IMR-90 (cell line): ENCODE measurements at regions of chr17 and their contacts with region 1.

Region 1: GRCh38 chr17:6473128-6473767 is 29.0 kb downstream of the PIMREG start:
- DNase-seq: peak; percentile 65
- ATAC-seq: peak; percentile 92
- H3K4me3 ChIP-seq: no peak overlapping the region
- H3K27ac ChIP-seq: no peak overlapping the region
- H3K4me1 ChIP-seq: peaks cover 13% of the 10 kb centered on the region
- H3K27me3 ChIP-seq: no peaks in the 10 kb centered on the region
- CTCF ChIP-seq: peak; percentile 83
- POLR2A ChIP-seq: no peak
- RAD21 ChIP-seq: peak; percentile 84

Region 2: GRCh38 chr17:6443692-6444569 is 29.3 kb before region 1 on chr17 and contains the start of gene PIMREG:
- CTCF ChIA-PET with region 1: no interaction called
- POLR2A ChIA-PET with region 1: no interaction called
- dilution Hi-C with region 1: no loop called
- in situ Hi-C with region 1: no loop called
- intact Hi-C with region 1: no loop called
- DNase-seq: peak; percentile 88
- ATAC-seq: peak; percentile 97
- H3K4me3 ChIP-seq: peak within 1 kb of the TSS; percentile 57
- H3K27ac ChIP-seq: peak within 1 kb of the TSS; percentile 76
- H3K4me1 ChIP-seq: peaks cover 3% of the 10 kb centered on the region; the same call in 1 of the 2 replicates
- H3K27me3 ChIP-seq: no peaks in the 10 kb centered on the region
- CTCF ChIP-seq: no peak
- POLR2A ChIP-seq: 0 out of 2 replicates have a peak, but pooled peaks have one; percentile 40
- RAD21 ChIP-seq: no peak
- total RNA-seq, gene PIMREG: 19.4 and 21.5 TPM in 2 replicates

Region 3: DNA sequence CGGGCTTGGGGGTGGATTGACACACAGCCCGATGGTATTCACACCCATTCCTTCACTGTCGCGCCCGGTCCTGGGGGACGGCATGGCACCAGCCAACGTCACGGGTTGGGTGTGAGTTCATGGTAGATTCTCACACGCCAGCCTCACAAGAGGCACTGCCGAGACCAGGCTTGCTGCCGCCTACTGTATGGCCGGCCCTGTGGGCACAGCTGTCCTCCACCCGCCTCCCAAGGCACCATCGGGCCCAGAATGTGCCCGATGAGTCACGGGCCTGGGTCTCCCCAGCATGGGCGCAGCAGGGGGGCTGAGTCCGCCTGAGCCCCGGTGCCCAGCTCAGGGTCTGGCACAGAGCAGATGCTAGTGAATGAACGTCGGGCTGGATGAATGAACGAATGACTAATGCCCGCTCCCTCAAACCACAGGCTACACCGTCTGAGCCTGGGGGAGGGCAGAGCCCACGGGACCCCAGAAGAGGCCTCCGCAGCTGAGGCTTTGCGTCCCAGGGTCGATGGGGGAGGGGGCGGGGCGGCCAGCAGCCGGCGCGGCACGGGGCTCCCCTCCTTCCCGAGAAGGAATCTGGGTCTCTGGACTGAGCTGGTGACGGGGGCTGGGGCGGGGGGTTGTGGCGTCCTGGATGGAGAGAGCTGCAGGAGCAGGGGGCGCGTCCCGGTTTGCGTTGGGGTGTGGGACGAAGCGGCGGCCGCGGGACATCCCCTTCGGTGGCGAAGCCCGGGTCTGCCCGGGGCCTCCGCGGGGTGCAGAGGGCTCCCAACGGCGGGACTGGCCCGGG is 82.3 kb after region 1 on chr17:
- CTCF ChIA-PET with region 1: no interaction called
- POLR2A ChIA-PET with region 1: no interaction called
- dilution Hi-C with region 1: no loop called
- in situ Hi-C with region 1: no loop called
- intact Hi-C with region 1: loop called (anchors 5 kb)
- DNase-seq: peak; percentile 39
- ATAC-seq: peak; percentile 50
- H3K4me3 ChIP-seq: peak overlapping the region; percentile 56
- H3K27ac ChIP-seq: no peak overlapping the region
- H3K4me1 ChIP-seq: peaks cover 5% of the 10 kb centered on the region; the same call in 1 of the 2 replicates
- H3K27me3 ChIP-seq: peaks cover 33% of the 10 kb centered on the region
- CTCF ChIP-seq: no peak
- POLR2A ChIP-seq: no peak
- RAD21 ChIP-seq: no peak

Region 4: DNA sequence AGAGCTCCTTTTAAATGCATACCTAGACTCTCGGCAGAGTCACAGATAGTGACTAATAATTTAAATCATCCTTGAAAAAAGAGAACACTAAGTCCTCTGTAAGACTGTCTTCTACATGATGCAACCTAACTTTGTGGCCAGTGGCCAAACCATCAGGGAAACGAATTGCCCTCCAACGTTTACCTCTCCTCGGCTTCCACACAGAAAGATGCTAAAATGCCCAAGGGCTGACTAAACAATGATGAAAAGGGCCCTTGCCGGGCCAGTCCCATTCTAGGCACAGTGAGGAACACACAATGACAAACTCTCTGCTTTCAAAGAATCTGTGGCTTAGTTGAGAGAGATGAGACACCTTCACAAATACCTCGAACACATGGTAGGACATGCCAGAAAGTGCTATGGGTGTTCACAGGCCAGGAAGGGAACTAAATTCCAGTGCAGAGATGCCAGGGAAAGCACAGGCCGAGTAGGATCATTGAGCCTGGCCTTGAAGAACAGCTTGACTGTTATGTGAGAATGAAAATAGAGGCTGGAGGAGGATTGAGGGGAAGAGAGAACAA is 118.4 kb after region 1 on chr17:
- CTCF ChIA-PET with region 1: interaction called, 3 read pairs
- POLR2A ChIA-PET with region 1: no interaction called
- dilution Hi-C with region 1: no loop called
- in situ Hi-C with region 1: no loop called
- intact Hi-C with region 1: loop called (anchors 5 kb)
- DNase-seq: peak; percentile 94
- ATAC-seq: peak; percentile 92
- H3K4me3 ChIP-seq: no peak overlapping the region
- H3K27ac ChIP-seq: peak overlapping the region; percentile 12; the same call in 1 of the 2 replicates
- H3K4me1 ChIP-seq: peaks cover 6% of the 10 kb centered on the region
- H3K27me3 ChIP-seq: no peaks in the 10 kb centered on the region
- CTCF ChIP-seq: no peak
- POLR2A ChIP-seq: no peak
- RAD21 ChIP-seq: 0 out of 2 replicates have a peak, but pooled peaks have one; percentile 3

Region 5: GRCh38 chr17:6640536-6641373 is 167.5 kb after region 1 on chr17 and contains the starts of genes KIAA0753 and TXNDC17:
- CTCF ChIA-PET with region 1: no interaction called
- POLR2A ChIA-PET with region 1: no interaction called
- dilution Hi-C with region 1: no loop called
- in situ Hi-C with region 1: loop called (anchors 10 kb)
- intact Hi-C with region 1: loop called (anchors 1 kb)
- DNase-seq: peak; percentile 90
- ATAC-seq: peak; percentile 93
- H3K4me3 ChIP-seq: peak within 1 kb of the TSS; percentile 81
- H3K27ac ChIP-seq: peak within 1 kb of the TSS; percentile 93
- H3K4me1 ChIP-seq: peaks cover 9% of the 10 kb centered on the region
- H3K27me3 ChIP-seq: no peaks in the 10 kb centered on the region
- CTCF ChIP-seq: no peak
- POLR2A ChIP-seq: peak; percentile 97
- RAD21 ChIP-seq: no peak; the same call in 1 of the 2 replicates
- total RNA-seq, gene KIAA0753: 17.6 and 18.3 TPM in 2 replicates
- total RNA-seq, gene TXNDC17: 45.0 and 174 TPM in 2 replicates

Region 6: DNA sequence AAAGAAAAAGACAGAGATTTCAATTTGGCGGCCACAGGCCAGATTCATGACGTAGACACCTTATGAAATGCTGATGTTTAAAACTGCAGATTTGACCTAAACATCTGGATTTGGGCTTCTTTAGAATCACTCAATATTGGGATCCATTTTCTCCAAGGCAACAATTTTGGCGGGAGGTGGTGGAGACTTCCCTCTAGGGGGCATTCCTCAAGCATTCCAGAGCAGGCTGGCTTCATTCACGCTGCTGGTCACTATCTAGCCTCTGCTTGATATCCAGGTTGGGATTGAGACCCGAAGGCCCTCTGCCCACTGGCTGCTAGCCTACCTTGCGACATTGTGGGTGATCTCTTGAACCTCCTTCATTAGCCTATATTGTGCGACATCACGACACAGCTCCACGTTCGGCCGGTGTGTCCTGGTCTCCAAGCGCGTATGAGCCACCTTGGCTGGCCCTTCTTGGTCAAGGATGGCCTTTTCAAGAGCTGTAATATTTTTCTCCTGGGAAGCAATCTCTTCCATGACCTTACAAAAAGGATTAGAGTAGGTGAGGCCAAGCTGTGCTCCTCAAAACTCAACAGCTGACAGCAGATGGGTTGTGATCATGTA is 327.3 kb after region 1 on chr17:
- CTCF ChIA-PET with region 1: no interaction called
- POLR2A ChIA-PET with region 1: no interaction called
- dilution Hi-C with region 1: no loop called
- in situ Hi-C with region 1: no loop called
- intact Hi-C with region 1: no loop called
- DNase-seq: peak; percentile 4
- ATAC-seq: 0 out of 2 replicates have a peak, but pooled peaks have one; percentile 29
- H3K4me3 ChIP-seq: no peak overlapping the region
- H3K27ac ChIP-seq: no peak overlapping the region
- H3K4me1 ChIP-seq: no peaks in the 10 kb centered on the region
- H3K27me3 ChIP-seq: peaks cover 8% of the 10 kb centered on the region
- CTCF ChIP-seq: peak; percentile 56
- POLR2A ChIP-seq: no peak
- RAD21 ChIP-seq: peak; percentile 67